Activated CD4-positive, alpha-beta memory T cell treated with anti-CD3 and anti-CD28 coated beads for 36 hours (primary cell): ENCODE measurements at regions of chr1 and their contacts with region 1.

Region 1: DNA sequence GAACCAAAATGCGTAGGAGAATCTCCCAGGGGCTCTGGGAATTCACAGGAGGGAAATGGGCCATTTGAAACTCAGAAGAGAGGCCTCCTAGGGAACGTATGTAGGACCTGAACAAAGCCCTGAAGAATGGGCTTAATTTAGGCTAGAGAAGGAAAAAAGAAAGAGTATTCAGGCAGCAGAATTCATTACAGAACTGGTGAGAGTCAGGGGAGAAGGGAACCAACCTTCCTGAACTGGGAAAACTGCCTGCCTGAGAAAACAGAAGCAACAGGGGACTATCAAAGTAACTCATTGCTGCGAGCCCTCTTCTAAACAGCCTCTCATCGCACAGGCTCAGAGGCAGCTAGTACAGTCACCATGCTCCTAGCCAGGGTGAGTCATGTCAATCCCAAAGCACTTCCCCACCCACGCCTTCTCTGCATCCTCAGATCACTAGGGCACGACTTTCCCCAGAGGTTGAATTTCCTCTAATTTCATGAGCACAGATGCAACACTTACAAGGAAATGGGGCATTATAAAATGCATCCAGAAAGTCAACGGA is 98.1 kb downstream of the ADSS2 start:
- DNase-seq: peak; percentile 80
- H3K4me3 Mint-ChIP-seq: no peak overlapping the region
- H3K27ac Mint-ChIP-seq: peak overlapping the region; percentile 64
- H3K4me1 Mint-ChIP-seq: peaks cover 36% of the 10 kb centered on the region
- H3K27me3 Mint-ChIP-seq: peaks cover 17% of the 10 kb centered on the region

Region 2: DNA sequence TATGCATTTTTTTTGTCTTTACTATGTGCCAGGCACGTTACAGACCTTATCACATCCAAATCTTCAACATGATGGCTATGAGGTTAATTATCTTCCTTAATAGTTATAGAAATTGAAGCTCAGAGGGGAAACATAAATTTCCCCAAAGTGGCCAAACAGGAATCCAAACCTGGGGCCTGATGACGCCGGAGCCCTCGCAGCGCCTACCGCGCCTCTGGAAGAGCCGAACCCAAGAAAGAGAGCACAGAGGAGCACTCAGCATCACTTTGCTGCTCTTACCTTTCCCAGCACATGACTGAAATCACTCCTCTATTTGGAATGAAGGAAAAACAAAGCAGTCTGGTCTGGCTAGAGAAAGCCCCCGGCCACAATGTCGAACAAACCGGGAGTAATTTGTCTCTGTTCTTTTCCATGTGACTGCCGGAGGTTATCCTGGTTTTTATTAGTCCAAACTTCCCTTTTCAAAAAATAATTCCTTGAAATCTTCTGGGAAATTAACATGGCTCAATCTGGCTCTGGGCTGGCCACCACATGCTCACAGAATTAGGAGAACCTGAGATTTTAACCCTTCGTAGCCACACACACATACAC is 97.4 kb before region 1 on chr1:
- CTCF ChIA-PET with region 1: no interaction called
- POLR2A ChIA-PET with region 1: no interaction called
- intact Hi-C with region 1: no loop called
- DNase-seq: no peak
- H3K4me3 Mint-ChIP-seq: no peak overlapping the region
- H3K27ac Mint-ChIP-seq: no peak overlapping the region
- H3K4me1 Mint-ChIP-seq: no peaks in the 10 kb centered on the region
- H3K27me3 Mint-ChIP-seq: peaks cover 1% of the 10 kb centered on the region

Region 3: GRCh38 chr1:244319283-244320132 is 34.1 kb before region 1 on chr1:
- CTCF ChIA-PET with region 1: no interaction called
- POLR2A ChIA-PET with region 1: no interaction called
- intact Hi-C with region 1: loop called (anchors 1 kb)
- DNase-seq: peak; percentile 78
- H3K4me3 Mint-ChIP-seq: no peak overlapping the region
- H3K27ac Mint-ChIP-seq: peak overlapping the region; percentile 64
- H3K4me1 Mint-ChIP-seq: peaks cover 29% of the 10 kb centered on the region
- H3K27me3 Mint-ChIP-seq: no peaks in the 10 kb centered on the region